HCT116 (cell line): ENCODE measurements at regions of chr1 and their contacts with region 1.

Region 1: GRCh38 chr1:47437447-47438164 is at the start of gene FOXD2:
- DNase-seq: peak; percentile 79
- ATAC-seq: peak; percentile 89
- H3K4me3 ChIP-seq: peak within 1 kb of the TSS; percentile 86 to 95
- H3K27ac ChIP-seq: peak within 1 kb of the TSS; percentile 96
- H3K4me1 ChIP-seq: peaks cover 3 to 10% of the 10 kb centered on the region in 2 experiments; a peak in 3 of 4 replicates
- H3K27me3 ChIP-seq: no peaks in the 10 kb centered on the region
- CTCF ChIP-seq: peak; percentile 78 to 81 (median 81)
- POLR2A ChIP-seq: peak; percentile 55
- RAD21 ChIP-seq: peak; percentile 38; the same call in 1 of the 2 replicates
- total RNA-seq, gene FOXD2: 1.9 TPM

Region 2: DNA sequence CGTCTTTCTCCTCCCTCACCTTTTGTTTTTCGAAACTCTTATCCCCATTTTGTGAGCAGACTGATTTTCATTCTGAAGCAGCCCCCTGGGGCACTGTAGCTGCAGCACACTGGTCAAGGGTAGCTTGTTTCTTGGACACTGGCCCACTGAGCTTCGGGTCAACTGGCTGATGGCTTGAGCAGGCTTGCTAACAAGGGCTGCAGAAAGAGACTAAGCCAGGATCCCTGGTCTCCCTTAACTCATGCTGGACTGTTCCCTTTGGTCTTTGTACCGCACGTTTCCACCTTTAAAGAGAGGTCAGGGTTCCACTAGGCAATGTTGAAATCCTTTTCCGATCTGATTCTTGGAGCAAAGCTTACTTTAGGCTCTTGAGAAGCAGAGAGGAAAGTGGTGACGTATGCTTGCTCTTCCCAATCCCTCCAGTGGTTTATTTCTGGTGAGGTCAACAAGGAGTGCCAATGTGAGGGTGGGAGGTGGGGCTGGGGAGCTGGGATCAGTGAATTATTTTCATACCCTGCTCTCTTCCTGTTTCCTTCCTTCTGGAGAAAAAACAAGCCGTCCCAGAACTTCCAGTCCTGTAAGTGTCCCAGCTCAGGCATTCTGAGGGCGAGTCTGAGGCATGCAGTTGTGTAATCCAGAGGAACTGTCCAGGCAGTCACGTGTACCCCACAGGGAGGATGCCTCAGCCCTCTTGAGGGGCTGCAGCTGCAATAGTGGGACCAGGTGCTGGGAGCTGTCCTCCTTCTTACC is 631.2 kb before region 1 on chr1:
- CTCF ChIA-PET with region 1: no interaction called
- POLR2A ChIA-PET with region 1: no interaction called
- RAD21 ChIA-PET with region 1: no interaction called
- intact Hi-C with region 1: no loop called
- DNase-seq: no peak
- ATAC-seq: no peak
- H3K4me3 ChIP-seq: no peak overlapping the region
- H3K27ac ChIP-seq: no peak overlapping the region
- H3K4me1 ChIP-seq: no peaks in the 10 kb centered on the region
- H3K27me3 ChIP-seq: peaks cover 21% of the 10 kb centered on the region; the same call in 1 of the 2 replicates
- CTCF ChIP-seq: no peak
- POLR2A ChIP-seq: no peak
- RAD21 ChIP-seq: no peak

Region 3: DNA sequence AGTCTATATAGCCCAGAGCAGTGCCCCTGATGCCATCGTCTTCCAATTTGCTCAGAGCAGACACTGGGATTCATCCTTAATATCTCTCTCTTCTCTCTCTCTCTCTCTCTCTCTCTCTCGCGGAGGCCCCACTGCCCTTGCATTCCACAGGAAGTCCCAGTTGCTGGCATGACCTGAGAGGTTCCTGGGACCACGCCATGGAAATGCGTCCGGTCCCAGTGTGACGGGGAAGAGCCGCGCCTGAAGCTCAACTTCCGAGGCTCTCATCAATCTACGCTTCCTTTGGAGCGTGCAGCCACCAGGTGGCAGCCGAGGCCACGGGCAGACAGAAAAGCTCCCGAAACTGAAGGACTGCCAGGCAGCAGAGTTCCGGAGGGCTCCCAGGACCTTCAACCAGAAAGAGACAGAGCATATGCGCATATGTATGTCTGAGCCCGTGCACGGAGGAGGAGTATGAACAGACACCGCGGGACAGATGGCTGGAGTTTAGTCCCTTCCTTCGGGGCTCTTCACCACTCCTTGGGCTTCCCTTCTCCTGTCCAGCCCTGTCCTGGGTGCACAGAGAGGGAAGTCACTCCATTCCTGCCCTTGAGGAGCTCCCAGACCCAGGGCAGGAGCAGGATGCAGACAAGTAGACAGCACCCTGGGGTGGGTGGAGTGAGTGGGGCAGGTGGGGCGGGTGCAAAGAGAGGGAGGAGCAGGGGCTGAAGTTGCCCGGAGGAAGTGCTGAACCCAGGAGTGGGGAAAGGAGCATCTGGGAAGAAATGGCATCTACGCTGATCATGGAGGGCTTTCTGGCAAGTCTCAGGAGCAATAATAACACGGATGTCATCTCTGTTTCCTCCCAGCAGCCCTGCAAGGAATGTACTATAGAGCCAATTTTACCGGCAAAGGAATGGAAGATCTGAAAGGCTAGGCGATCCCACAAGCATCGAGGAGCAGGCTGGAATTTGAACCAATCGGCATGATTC is 258.3 kb before region 1 on chr1:
- CTCF ChIA-PET with region 1: interaction called, 18 read pairs
- POLR2A ChIA-PET with region 1: interaction called, 3 read pairs
- RAD21 ChIA-PET with region 1: interaction called in 1 of 2 experiments, 3 read pairs
- intact Hi-C with region 1: no loop called
- DNase-seq: peak; percentile 89
- ATAC-seq: peak; percentile 81
- H3K4me3 ChIP-seq: peak overlapping the region; percentile 49 to 65
- H3K27ac ChIP-seq: peak overlapping the region; percentile 41
- H3K4me1 ChIP-seq: peaks cover 4 to 26% of the 10 kb centered on the region in 2 experiments
- H3K27me3 ChIP-seq: no peaks in the 10 kb centered on the region
- CTCF ChIP-seq: peak; percentile 89 to 95 (median 89)
- POLR2A ChIP-seq: no peak
- RAD21 ChIP-seq: peak; percentile 95

Region 4: DNA sequence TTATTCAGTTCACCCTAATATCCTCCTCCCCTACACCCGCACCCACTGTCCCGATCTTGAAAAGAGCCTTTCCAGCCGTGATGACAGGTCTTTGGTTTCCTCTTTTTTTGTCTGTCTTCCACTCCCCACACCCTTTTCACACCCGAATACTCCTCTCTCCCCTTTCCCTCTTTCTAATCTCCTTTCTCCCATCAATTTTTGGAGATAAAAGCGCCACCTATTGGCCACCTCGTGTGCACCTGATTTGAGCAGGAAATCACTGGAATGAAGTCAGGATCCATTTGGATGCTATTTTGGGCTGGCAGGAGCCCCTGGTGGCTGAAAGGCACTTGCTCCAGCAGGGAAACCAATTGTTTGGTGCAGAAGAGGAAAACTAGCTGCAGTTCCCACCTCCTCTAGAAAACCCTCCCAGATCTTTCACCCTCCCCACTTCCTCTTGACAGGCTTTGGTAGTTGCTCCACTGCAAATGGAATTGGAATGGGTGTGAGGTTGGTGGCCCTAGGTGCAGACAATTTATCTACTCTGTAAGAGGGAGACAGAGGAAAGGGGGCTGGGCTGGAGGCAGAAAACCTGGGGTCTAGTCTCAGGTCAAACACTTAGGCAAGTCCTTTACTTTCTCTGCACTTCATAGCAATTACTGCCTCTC is 13.1 kb before region 1 on chr1:
- CTCF ChIA-PET with region 1: interaction called, 17 read pairs
- POLR2A ChIA-PET with region 1: interaction called, 3 read pairs
- RAD21 ChIA-PET with region 1: no interaction called
- intact Hi-C with region 1: no loop called
- DNase-seq: peak; percentile 63
- ATAC-seq: peak; percentile 91
- H3K4me3 ChIP-seq: no peak overlapping the region
- H3K27ac ChIP-seq: no peak overlapping the region
- H3K4me1 ChIP-seq: peaks cover 3 to 11% of the 10 kb centered on the region in 2 experiments; a peak in 2 of 4 replicates
- H3K27me3 ChIP-seq: no peaks in the 10 kb centered on the region
- CTCF ChIP-seq: peak; percentile 91 to 98 (median 96)
- POLR2A ChIP-seq: no peak
- RAD21 ChIP-seq: peak; percentile 70

Region 5: DNA sequence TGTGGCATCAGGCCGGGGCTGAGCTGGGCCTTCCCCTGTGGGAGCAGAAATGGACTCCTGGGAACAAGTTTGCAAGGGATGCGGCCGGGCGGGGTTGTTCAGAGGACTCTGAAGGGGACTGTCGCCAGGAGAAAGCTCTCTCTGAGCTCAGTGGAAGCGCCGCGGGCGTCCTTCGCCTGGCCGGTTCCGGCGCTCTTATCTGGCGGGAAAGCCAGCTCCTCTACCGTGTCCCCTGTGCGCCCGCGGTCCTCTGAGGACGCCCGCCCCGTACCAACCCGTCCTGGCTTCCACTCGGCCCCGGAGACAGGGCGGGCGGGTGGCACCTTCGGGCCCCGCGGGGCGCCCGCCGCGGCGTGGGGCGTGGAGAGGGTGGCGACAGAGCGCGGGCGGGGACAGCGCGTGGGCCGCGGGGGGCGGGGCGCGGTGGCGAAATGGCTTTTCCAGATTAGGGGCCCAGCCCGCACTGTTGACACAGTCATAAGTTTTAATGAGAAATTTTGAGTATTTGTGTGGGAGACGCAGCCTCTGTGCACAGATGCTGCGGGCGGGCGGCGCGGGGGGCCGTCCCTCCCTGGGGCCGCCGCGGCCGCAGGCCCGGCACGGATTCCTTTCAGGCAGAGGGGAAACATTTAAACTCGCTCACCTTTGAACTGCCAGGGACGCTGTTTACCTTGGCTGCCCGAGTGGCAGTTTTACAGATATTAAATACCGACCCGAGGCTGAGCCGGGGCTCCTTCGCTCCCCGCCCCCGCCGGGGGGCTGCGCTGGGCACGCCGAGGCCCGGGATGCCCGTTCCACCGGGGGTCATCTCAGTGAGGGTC is 70.5 kb after region 1 on chr1:
- CTCF ChIA-PET with region 1: no interaction called
- POLR2A ChIA-PET with region 1: no interaction called
- RAD21 ChIA-PET with region 1: no interaction called
- intact Hi-C with region 1: no loop called
- DNase-seq: no peak
- ATAC-seq: no peak
- H3K4me3 ChIP-seq: no peak overlapping the region
- H3K27ac ChIP-seq: no peak overlapping the region
- H3K4me1 ChIP-seq: no peaks in the 10 kb centered on the region
- H3K27me3 ChIP-seq: peaks cover 8% of the 10 kb centered on the region; the same call in 1 of the 2 replicates
- CTCF ChIP-seq: no peak
- POLR2A ChIP-seq: no peak
- RAD21 ChIP-seq: no peak

Region 6: DNA sequence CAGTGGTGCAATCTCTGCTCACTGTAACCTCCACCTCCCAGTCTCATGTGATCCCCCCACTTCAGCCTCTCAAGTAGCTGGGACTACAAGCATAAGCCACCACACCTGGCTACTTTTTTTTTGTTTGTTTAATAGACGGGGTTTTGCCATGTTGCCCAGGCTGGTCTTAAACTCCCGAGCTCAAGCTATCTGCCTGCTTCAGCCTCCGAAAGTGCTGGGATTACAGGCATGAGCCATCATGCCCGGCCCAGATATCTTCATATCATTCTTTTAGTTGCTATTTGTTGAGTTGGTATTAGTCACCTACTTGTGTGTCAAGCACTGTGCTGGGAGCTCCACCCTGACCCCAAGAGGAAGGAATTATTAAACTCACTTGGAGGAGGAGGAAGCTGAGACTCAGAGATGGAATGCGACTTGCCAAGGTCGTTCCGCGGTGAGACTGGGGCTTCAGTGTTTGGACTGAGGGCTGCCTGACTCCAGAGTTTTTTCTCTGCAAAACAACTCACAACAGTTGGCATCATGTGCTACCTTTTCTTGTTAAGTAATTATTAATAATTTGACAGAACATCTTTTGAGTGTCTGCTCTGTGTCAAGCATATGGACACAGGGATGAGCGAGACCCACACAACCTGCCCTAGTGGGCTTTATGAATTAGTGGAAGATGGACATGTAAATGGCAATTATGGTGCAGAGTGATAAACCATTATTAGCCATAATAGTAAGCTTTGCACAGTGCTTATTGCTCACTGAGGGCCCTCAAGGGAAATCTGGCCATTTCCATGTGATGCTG is 132.3 kb after region 1 on chr1:
- CTCF ChIA-PET with region 1: interaction called, 7 read pairs
- POLR2A ChIA-PET with region 1: no interaction called
- RAD21 ChIA-PET with region 1: interaction called in 1 of 2 experiments, 10 read pairs
- intact Hi-C with region 1: no loop called
- DNase-seq: peak; percentile 79
- ATAC-seq: peak; percentile 99
- H3K4me3 ChIP-seq: peak overlapping the region in 1 of 2 experiments; percentile 21; a peak in 1 of 4 replicates
- H3K27ac ChIP-seq: peak overlapping the region; percentile 13; the same call in 1 of the 2 replicates
- H3K4me1 ChIP-seq: peaks cover 3 to 16% of the 10 kb centered on the region in 2 experiments; a peak in 2 of 4 replicates
- H3K27me3 ChIP-seq: no peaks in the 10 kb centered on the region
- CTCF ChIP-seq: peak; percentile 62 to 71 (median 68); a peak in 5 of 6 replicates
- POLR2A ChIP-seq: no peak
- RAD21 ChIP-seq: peak; percentile 62

Region 7: DNA sequence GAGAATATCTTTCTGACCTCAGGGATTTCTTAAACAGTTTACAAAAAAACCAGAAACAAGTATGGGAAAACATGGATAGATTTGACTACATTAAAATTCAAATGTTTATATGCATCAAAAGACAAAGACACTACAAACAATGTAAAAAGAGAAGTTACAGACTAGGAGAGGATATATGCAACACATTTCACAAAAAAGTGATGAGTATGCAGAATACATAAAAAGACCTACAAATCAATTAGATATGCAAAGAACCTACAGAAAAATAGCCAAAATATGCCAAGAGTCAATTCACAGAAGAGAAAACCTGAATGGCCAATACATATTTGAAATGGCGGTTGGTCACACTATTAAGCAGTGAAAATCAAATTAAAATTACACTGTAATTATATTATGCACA is 175.2 kb after region 1 on chr1:
- CTCF ChIA-PET with region 1: no interaction called
- POLR2A ChIA-PET with region 1: no interaction called
- RAD21 ChIA-PET with region 1: no interaction called
- intact Hi-C with region 1: no loop called
- DNase-seq: no peak
- ATAC-seq: no peak
- H3K4me3 ChIP-seq: no peak overlapping the region
- H3K27ac ChIP-seq: no peak overlapping the region
- H3K4me1 ChIP-seq: peaks cover 0 to 5% of the 10 kb centered on the region in 2 experiments; a peak in 1 of 4 replicates
- H3K27me3 ChIP-seq: no peaks in the 10 kb centered on the region
- CTCF ChIP-seq: no peak
- POLR2A ChIP-seq: no peak
- RAD21 ChIP-seq: no peak

Region 8: DNA sequence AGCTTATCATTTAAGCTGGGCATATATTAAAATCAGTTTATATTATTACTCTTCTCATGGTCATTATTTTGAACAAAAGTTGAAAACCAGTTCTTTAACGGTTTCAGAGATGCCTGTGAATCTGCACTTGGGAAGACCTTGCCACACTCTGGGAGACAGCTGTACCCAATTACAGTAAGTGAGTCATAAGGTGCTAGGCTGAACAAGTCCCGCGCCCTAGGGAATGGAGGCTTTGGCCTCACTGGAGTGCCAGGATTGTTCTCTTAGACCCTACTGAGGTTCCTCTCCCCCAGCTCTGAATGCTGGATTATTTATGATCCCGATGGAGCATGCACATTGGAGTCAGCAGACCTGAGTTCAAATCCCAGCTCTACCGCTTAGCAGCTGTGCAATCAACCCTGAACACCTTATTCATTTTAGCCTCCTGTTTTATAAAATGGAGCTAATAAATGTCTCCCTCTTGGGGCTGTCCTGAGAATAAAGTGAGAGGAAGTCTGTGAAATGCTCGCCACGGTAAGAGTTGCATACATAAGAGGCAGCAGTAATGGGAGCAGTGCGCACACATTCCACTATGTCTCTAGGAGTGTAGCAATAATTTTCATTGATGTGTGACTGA is 266.5 kb after region 1 on chr1:
- CTCF ChIA-PET with region 1: interaction called, 75 read pairs
- POLR2A ChIA-PET with region 1: no interaction called
- RAD21 ChIA-PET with region 1: no interaction called
- intact Hi-C with region 1: no loop called
- DNase-seq: peak; percentile 15
- ATAC-seq: peak; percentile 77
- H3K4me3 ChIP-seq: no peak overlapping the region
- H3K27ac ChIP-seq: no peak overlapping the region
- H3K4me1 ChIP-seq: peaks cover 0 to 7% of the 10 kb centered on the region in 2 experiments; a peak in 1 of 4 replicates
- H3K27me3 ChIP-seq: no peaks in the 10 kb centered on the region
- CTCF ChIP-seq: peak; percentile 23 to 58 (median 47); a peak in 4 of 6 replicates
- POLR2A ChIP-seq: no peak
- RAD21 ChIP-seq: peak; percentile 59